CD8-positive, alpha-beta memory T cell (primary cell): ENCODE measurements at regions of chr2 and their contacts with region 1.

Region 1: GRCh38 chr2:218710687-218711549 is at the start of gene TTLL4:
- DNase-seq: peak; percentile 98 to 99 (median 99)
- H3K4me3 ChIP-seq: peak within 1 kb of the TSS; percentile 69
- H3K4me3 Mint-ChIP-seq: peak within 1 kb of the TSS; percentile 90 to 99 (median 95)
- H3K27ac ChIP-seq: peak within 1 kb of the TSS; percentile 82
- H3K27ac Mint-ChIP-seq: peak within 1 kb of the TSS; percentile 72 to 98 (median 94)
- H3K4me1 ChIP-seq: peaks cover 16% of the 10 kb centered on the region
- H3K4me1 Mint-ChIP-seq: peaks cover 13 to 20% (median 17%) of the 10 kb centered on the region in 3 donors
- H3K27me3 ChIP-seq: no peaks in the 10 kb centered on the region
- H3K27me3 Mint-ChIP-seq: peaks cover 4 to 10% of the 10 kb centered on the region in 2 donors
- total RNA-seq, gene TTLL4: 42.0 to 44.2 TPM

Region 2: DNA sequence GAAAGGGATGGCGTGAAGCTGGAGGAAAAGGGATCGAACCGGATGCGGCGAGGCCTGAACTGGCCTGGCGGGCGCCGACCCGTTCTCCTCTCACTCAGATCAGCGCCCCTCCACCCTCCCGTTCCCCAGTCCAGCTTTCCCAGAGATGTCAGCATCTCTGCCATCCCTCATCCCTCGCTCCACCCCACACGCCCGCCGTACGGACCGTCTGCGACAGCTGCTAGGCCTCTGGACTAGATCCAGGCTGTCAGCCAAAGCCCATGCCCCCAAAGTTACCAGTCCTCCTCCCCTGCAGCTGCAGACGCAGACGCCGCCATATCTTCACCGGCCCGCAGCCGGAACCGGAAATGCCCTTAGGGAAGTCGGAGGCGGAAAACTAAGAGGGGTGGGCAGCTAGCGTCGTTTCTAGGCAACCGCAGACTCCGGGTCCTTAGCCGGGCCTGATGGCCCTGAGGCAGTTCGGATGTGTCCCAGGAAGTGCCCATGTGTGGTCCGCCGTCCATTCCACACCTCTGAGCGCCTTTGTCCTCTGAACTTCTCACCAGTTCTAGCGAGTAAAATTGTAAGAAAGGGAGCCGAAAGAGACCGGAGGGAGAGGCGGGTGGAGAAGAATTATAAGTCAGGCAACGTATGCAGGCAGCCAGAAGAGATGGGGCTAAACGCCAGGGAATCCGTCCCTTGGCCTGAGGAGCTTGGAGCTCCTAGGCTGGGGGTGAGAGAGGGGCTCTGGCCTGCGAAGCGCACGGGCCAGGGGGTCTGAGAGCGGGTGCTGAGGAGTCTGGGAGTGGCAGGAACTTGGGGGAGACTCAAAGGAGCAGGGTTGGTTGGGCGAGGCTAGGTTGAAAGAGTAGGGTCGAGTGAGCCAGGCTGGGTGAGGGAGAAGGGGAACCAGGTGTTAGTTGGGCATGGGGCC is 39.0 kb before region 1 on chr2 and contains the starts of genes RNF25 and STK36:
- CTCF ChIA-PET with region 1: interaction called, 15 read pairs
- POLR2A ChIA-PET with region 1: interaction called, 3 read pairs
- DNase-seq: peak; percentile 69 to 89 (median 78)
- H3K4me3 ChIP-seq: peak within 1 kb of the TSS; percentile 97
- H3K4me3 Mint-ChIP-seq: peak within 1 kb of the TSS; percentile 89 to 100 (median 98)
- H3K27ac ChIP-seq: peak within 1 kb of the TSS; percentile 82
- H3K27ac Mint-ChIP-seq: peak within 1 kb of the TSS; percentile 85 to 99 (median 98)
- H3K4me1 ChIP-seq: peaks cover 17% of the 10 kb centered on the region
- H3K4me1 Mint-ChIP-seq: peaks cover 21 to 35% (median 23%) of the 10 kb centered on the region in 3 donors
- H3K27me3 ChIP-seq: no peaks in the 10 kb centered on the region
- H3K27me3 Mint-ChIP-seq: no peaks in the 10 kb centered on the region
- total RNA-seq, gene RNF25: 29.0 to 36.8 TPM
- total RNA-seq, gene STK36: 19.9 to 21.4 TPM

Region 3: DNA sequence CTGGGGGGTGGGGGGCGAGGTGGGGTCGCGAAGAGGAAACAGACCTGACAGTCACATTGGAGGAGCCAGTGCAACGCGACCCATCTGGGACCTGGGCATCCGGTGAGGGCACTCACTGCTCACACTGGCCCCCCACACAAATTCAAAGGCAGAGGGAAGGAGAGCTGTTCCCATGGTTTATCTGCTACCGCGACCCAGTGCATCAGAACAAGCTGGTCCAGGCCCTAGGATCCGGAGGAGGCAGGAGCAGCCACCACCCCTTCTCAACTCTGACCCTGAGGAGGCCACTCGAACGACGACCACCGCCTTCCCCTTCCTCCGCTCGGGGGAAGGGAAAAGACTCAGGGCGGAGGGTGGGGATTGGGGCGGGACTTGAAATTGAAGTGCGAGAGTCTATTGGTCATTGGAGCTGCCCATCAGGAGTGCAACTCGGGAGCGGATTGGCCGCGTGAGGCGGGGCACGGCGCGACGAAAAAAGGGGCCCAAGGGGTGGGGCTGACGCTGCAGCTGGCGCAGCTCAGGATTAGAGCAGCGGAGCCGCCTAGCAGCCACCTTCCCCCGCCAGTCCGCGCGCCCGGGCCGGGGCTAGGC is 248.3 kb after region 1 on chr2 and contains the start of gene CDK5R2:
- CTCF ChIA-PET with region 1: no interaction called
- POLR2A ChIA-PET with region 1: no interaction called
- DNase-seq: peak; percentile 39 to 73 (median 53)
- H3K4me3 ChIP-seq: no peak within 1 kb of the TSS
- H3K4me3 Mint-ChIP-seq: peak within 1 kb of the TSS; percentile 59 to 85 (median 72)
- H3K27ac ChIP-seq: no peak within 1 kb of the TSS
- H3K27ac Mint-ChIP-seq: peak within 1 kb of the TSS in 2 of 8 donors; percentile 32 to 34
- H3K4me1 ChIP-seq: peaks cover 11% of the 10 kb centered on the region
- H3K4me1 Mint-ChIP-seq: peaks cover 12 to 37% (median 18%) of the 10 kb centered on the region in 3 donors
- H3K27me3 ChIP-seq: peaks cover 48% of the 10 kb centered on the region
- H3K27me3 Mint-ChIP-seq: peaks cover 61 to 74% of the 10 kb centered on the region in 2 donors
- total RNA-seq, gene CDK5R2: not detected